K562 (cell line): ENCODE measurements at regions of chr9 and their contacts with region 1.

Region 1: DNA sequence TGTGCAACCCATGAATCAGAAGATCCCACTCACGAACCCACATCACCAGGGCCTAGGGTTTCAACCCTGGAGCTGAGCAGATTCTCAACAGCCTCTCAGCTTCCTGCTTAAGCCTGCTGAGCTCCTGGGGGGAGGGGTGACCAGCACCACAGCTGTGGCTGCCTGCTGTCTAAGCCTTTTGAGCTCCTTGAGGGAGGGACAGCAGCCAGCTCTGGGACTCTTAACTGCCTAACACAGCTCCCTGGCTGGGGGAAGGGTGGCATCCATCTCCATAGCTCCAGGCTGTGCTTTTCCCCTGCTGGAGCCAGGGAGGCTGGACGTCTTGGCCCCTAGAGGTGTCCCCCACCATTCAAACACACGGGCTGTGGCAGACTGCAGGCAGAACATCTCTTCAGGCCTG is 250.3 kb downstream of the DMAC1 start:
- DNase-seq: no peak
- ATAC-seq: no peak
- H3K4me3 ChIP-seq: no peak overlapping the region
- H3K27ac ChIP-seq: no peak overlapping the region
- H3K4me1 ChIP-seq: no peaks in the 10 kb centered on the region
- H3K27me3 ChIP-seq: no peaks in the 10 kb centered on the region
- CTCF ChIP-seq: no peak
- EP300 ChIP-seq: no peak
- POLR2A ChIP-seq: no peak
- RAD21 ChIP-seq: no peak

Region 2: DNA sequence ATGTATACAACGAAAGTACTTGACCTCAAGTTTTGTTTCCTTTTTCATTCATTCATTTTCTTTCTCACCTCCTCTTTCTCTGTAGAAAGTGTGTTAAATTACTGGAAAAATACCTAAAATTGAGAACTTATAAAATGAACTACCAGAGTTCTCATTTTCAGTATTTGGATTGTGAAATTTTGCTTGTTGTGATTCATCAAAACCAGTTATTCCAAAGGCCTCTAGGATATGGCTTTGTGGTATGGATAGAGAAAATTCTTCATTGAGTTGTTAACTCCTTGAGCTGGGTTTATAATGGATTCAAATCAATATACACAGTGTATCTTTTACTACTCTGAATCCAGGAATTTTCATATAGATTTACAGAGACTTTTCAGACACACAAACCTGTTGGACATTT is 503.9 kb before region 1 on chr9:
- CTCF ChIA-PET with region 1: no interaction called
- POLR2A ChIA-PET with region 1: no interaction called
- in situ Hi-C with region 1: loop called (anchors 10 kb)
- intact Hi-C with region 1: no loop called
- DNase-seq: no peak
- ATAC-seq: no peak
- H3K4me3 ChIP-seq: no peak overlapping the region
- H3K27ac ChIP-seq: no peak overlapping the region
- H3K4me1 ChIP-seq: no peaks in the 10 kb centered on the region
- H3K27me3 ChIP-seq: no peaks in the 10 kb centered on the region
- CTCF ChIP-seq: no peak
- EP300 ChIP-seq: no peak
- POLR2A ChIP-seq: no peak
- RAD21 ChIP-seq: no peak